Caco-2 (cell line): ENCODE measurements at regions of chr13 and their contacts with region 1.

Region 1: GRCh38 chr13:97257800-97258799 is 36.0 kb downstream of the MBNL2 start:
- DNase-seq: peak; percentile 86 to 88
- H3K4me3 ChIP-seq: no peak overlapping the region
- H3K4me3 Mint-ChIP-seq: peak overlapping the region; percentile 62
- H3K27ac Mint-ChIP-seq: peak overlapping the region; percentile 98
- H3K4me1 ChIP-seq: peaks cover 76% of the 10 kb centered on the region
- H3K4me1 Mint-ChIP-seq: peaks cover 70% of the 10 kb centered on the region
- H3K27me3 ChIP-seq: no peaks in the 10 kb centered on the region
- H3K27me3 Mint-ChIP-seq: no peaks in the 10 kb centered on the region
- CTCF ChIP-seq: peak in 1 of 2 experiments; percentile 12

Region 2: GRCh38 chr13:96925916-96926628 is 332.0 kb before region 1 on chr13:
- CTCF ChIA-PET with region 1: no interaction called
- POLR2A ChIA-PET with region 1: no interaction called
- intact Hi-C with region 1: loop called (anchors 10 kb)
- DNase-seq: peak; percentile 40 to 74
- H3K4me3 ChIP-seq: no peak overlapping the region
- H3K4me3 Mint-ChIP-seq: no peak overlapping the region
- H3K27ac Mint-ChIP-seq: no peak overlapping the region
- H3K4me1 ChIP-seq: peaks cover 20% of the 10 kb centered on the region
- H3K4me1 Mint-ChIP-seq: peaks cover 12% of the 10 kb centered on the region
- H3K27me3 ChIP-seq: no peaks in the 10 kb centered on the region
- H3K27me3 Mint-ChIP-seq: peaks cover 9% of the 10 kb centered on the region
- CTCF ChIP-seq: no peak

Region 3: GRCh38 chr13:96946709-96947311 is 311.3 kb before region 1 on chr13:
- CTCF ChIA-PET with region 1: no interaction called
- POLR2A ChIA-PET with region 1: no interaction called
- intact Hi-C with region 1: no loop called
- DNase-seq: peak; percentile 50 to 66
- H3K4me3 ChIP-seq: no peak overlapping the region
- H3K4me3 Mint-ChIP-seq: no peak overlapping the region
- H3K27ac Mint-ChIP-seq: no peak overlapping the region
- H3K4me1 ChIP-seq: 0 out of 2 replicates have a peak, but pooled peaks cover 5% of the 10 kb centered on the region
- H3K4me1 Mint-ChIP-seq: peaks cover 13% of the 10 kb centered on the region
- H3K27me3 ChIP-seq: no peaks in the 10 kb centered on the region
- H3K27me3 Mint-ChIP-seq: peaks cover 5% of the 10 kb centered on the region
- CTCF ChIP-seq: no peak

Region 4: DNA sequence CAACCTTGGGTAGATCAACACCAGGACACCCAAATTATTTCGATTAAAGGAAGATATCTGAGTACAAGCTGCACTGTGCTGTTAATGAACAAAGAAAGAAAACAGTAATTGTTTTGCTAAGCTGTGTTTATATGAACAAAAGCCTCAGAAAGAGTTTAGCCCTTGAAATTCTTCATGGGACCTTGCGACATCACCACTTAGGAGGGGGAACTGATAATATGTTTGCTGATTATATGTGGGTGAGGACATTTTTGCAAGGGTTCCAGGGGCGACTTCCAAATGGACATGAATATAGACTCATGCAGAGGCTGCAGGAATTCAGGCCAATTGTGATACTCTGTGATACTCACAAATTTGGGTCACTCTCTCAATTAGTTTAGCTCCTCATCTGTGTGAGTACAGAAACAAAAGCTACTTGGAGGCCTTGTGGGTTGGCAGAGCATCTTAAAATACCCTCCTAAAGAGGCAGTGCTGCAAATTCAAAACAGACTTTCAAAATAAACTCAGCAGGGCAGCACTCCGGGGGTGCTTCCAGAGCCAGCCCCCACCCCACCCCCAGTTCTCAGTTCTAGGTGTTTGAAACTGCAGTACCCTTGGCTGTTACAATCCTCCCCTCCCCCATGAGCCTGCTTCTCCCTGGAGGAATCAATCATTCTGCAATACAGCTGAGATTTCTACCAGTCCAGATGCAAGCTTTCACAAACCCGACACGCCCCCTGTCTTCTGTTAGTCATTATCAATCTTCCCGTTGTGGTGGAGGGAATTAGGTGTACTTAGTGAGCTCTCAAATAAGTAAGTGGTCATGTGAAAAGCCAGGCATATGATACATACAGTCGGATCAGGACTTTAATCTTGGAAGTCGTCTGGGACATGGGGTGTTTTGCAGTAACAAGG is 132.9 kb before region 1 on chr13:
- CTCF ChIA-PET with region 1: no interaction called
- POLR2A ChIA-PET with region 1: no interaction called
- intact Hi-C with region 1: no loop called
- DNase-seq: peak; percentile 44 to 46
- H3K4me3 ChIP-seq: no peak overlapping the region
- H3K4me3 Mint-ChIP-seq: no peak overlapping the region
- H3K27ac Mint-ChIP-seq: no peak overlapping the region
- H3K4me1 ChIP-seq: peaks cover 62% of the 10 kb centered on the region
- H3K4me1 Mint-ChIP-seq: peaks cover 59% of the 10 kb centered on the region
- H3K27me3 ChIP-seq: no peaks in the 10 kb centered on the region
- H3K27me3 Mint-ChIP-seq: no peaks in the 10 kb centered on the region
- CTCF ChIP-seq: peak in 1 of 2 experiments; percentile 14

Region 5: GRCh38 chr13:97221989-97222700 is 36.0 kb before region 1 on chr13 and contains the start of gene MBNL2:
- CTCF ChIA-PET with region 1: no interaction called
- POLR2A ChIA-PET with region 1: interaction called, 4 read pairs
- intact Hi-C with region 1: loop called (anchors 1 kb)
- DNase-seq: peak; percentile 91 to 92
- H3K4me3 ChIP-seq: peak within 1 kb of the TSS; percentile 51
- H3K4me3 Mint-ChIP-seq: peak within 1 kb of the TSS; percentile 95
- H3K27ac Mint-ChIP-seq: peak within 1 kb of the TSS; percentile 89
- H3K4me1 ChIP-seq: peaks cover 43% of the 10 kb centered on the region
- H3K4me1 Mint-ChIP-seq: peaks cover 40% of the 10 kb centered on the region
- H3K27me3 ChIP-seq: no peaks in the 10 kb centered on the region
- H3K27me3 Mint-ChIP-seq: no peaks in the 10 kb centered on the region
- CTCF ChIP-seq: no peak
- total RNA-seq, gene MBNL2: 41.6 TPM in 2 replicates

Region 6: DNA sequence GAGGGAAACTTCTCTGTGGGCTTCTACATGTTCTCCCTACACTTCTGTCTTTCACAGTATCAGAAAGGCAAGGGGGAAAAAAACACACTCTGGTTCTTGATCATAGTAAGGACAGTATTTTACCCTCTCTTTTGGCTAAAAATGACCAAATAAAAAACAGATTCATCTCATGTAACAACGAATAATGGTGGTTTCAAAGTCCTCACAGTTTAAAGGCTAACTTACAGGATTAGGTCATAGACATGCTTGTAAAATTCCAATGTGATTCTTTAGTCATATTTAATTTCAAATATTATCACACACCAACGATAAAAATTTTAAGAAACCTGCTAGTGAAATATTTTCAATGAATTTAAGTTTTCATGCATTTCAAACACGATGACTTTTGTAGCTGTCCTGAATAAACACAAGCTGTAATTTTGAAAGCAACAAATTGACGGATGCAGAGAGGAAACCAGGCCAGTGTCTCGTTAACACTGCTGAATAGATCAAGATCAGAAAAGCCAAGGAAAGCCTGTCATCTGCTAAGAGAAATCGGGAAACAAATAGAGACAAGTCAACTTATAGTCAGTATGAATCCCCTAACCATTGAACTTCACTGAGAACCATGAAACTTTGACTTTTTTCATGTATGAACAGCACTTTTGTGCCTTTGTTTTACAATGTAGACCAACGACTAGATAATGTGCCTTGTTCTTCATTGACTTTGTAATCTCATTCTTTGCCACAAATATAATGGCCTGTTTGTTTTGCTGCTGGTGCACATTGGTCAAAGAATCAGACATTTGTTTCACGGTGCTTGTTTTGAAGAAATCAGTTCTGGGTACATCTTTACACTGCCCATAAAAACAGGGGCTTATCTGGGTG is 14.0 kb before region 1 on chr13:
- CTCF ChIA-PET with region 1: no interaction called
- POLR2A ChIA-PET with region 1: no interaction called
- intact Hi-C with region 1: loop called (anchors 1 kb)
- DNase-seq: peak; percentile 60 to 61
- H3K4me3 ChIP-seq: no peak overlapping the region
- H3K4me3 Mint-ChIP-seq: peak overlapping the region; percentile 9
- H3K27ac Mint-ChIP-seq: peak overlapping the region; percentile 48
- H3K4me1 ChIP-seq: peaks cover 44% of the 10 kb centered on the region
- H3K4me1 Mint-ChIP-seq: peaks cover 40% of the 10 kb centered on the region
- H3K27me3 ChIP-seq: no peaks in the 10 kb centered on the region
- H3K27me3 Mint-ChIP-seq: no peaks in the 10 kb centered on the region
- CTCF ChIP-seq: no peak

Region 7: GRCh38 chr13:97275265-97275664 is 17.2 kb after region 1 on chr13:
- CTCF ChIA-PET with region 1: no interaction called
- POLR2A ChIA-PET with region 1: no interaction called
- intact Hi-C with region 1: loop called (anchors 1 kb)
- DNase-seq: no peak
- H3K4me3 ChIP-seq: no peak overlapping the region
- H3K4me3 Mint-ChIP-seq: no peak overlapping the region
- H3K27ac Mint-ChIP-seq: peak overlapping the region; percentile 29
- H3K4me1 ChIP-seq: peaks cover 71% of the 10 kb centered on the region
- H3K4me1 Mint-ChIP-seq: peaks cover 25% of the 10 kb centered on the region
- H3K27me3 ChIP-seq: no peaks in the 10 kb centered on the region
- H3K27me3 Mint-ChIP-seq: no peaks in the 10 kb centered on the region
- CTCF ChIP-seq: no peak

Region 8: GRCh38 chr13:97307882-97308624 is 50.0 kb after region 1 on chr13:
- CTCF ChIA-PET with region 1: no interaction called
- POLR2A ChIA-PET with region 1: no interaction called
- intact Hi-C with region 1: loop called (anchors 2 kb)
- DNase-seq: no peak
- H3K4me3 ChIP-seq: no peak overlapping the region
- H3K4me3 Mint-ChIP-seq: peak overlapping the region; percentile 13
- H3K27ac Mint-ChIP-seq: peak overlapping the region; percentile 84
- H3K4me1 ChIP-seq: peaks cover 50% of the 10 kb centered on the region
- H3K4me1 Mint-ChIP-seq: peaks cover 31% of the 10 kb centered on the region
- H3K27me3 ChIP-seq: no peaks in the 10 kb centered on the region
- H3K27me3 Mint-ChIP-seq: no peaks in the 10 kb centered on the region
- CTCF ChIP-seq: no peak